Sciatic nerve (tissue), 2 donors: ENCODE measurements at regions of chr22 and their contacts with region 1.

Region 1: GRCh38 chr22:43151251-43152002 is at the start of gene TSPO:
- DNase-seq: peak; percentile 90
- ATAC-seq: peak; percentile 72
- total RNA-seq, gene TSPO: 94.6 TPM

Region 2: DNA sequence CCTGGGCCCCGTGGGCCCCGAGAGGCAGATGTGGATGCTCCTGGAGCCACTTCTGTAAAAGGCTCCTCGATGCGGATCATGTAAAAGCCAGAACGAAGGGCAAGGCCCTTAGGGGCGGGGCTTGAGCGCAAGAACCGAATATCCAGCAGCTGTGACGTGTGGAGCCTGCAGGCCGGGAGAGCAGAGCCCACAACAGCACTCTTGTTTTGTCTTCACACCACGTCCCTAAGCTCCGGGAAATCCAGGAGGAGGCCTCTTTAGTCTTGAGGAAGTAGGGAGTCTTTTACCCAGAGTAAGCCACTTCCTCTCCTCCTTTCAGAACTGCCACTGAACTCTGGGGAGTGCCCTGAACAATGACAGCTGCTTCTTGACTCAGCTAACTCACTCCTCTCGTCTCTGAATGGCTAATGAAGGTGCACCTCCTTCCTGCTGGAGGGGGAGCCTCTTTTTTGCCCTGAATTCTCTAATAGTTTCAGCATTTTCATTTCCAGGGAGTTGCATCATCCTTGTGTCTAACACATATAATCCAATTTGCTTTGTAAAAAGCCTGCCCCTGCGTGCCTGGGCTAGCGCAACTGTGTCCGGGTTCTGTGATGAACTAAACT is 1933.8 kb before region 1 on chr22:
- intact Hi-C with region 1: loop called (anchors 5 kb)
- DNase-seq: peak; percentile 81
- ATAC-seq: peak; percentile 94

Region 3: GRCh38 chr22:44940130-44940529 is 1788.7 kb after region 1 on chr22:
- intact Hi-C with region 1: no loop called
- DNase-seq: no peak
- ATAC-seq: no peak